SK-N-SH (cell line): ENCODE measurements at regions of chr16 and their contacts with region 1.

Region 1: GRCh38 chr16:47141773-47142485 is 1.8 kb downstream of the NETO2 start:
- DNase-seq: peak; percentile 76
- H3K4me3 ChIP-seq: peak overlapping the region; percentile 83 to 84
- H3K27ac ChIP-seq: peak overlapping the region; percentile 54 to 85; a peak in 3 of 4 replicates
- H3K4me1 ChIP-seq: peaks cover 7 to 15% of the 10 kb centered on the region in 2 experiments; a peak in 2 of 4 replicates
- H3K27me3 ChIP-seq: no peaks in the 10 kb centered on the region
- CTCF ChIP-seq: peak; percentile 93
- EP300 ChIP-seq: no peak
- RAD21 ChIP-seq: peak; percentile 96

Region 2: GRCh38 chr16:46947900-46948547 is 193.9 kb before region 1 on chr16:
- CTCF ChIA-PET with region 1: interaction called, 10 read pairs
- POLR2A ChIA-PET with region 1: no interaction called
- DNase-seq: peak; percentile 65
- H3K4me3 ChIP-seq: no peak overlapping the region
- H3K27ac ChIP-seq: no peak overlapping the region
- H3K4me1 ChIP-seq: no peaks in the 10 kb centered on the region
- H3K27me3 ChIP-seq: no peaks in the 10 kb centered on the region
- CTCF ChIP-seq: peak; percentile 72
- EP300 ChIP-seq: no peak
- RAD21 ChIP-seq: peak; percentile 87

Region 3: GRCh38 chr16:47018223-47018891 is 123.6 kb before region 1 on chr16:
- CTCF ChIA-PET with region 1: interaction called, 11 read pairs
- POLR2A ChIA-PET with region 1: no interaction called
- DNase-seq: peak; percentile 76
- H3K4me3 ChIP-seq: no peak overlapping the region
- H3K27ac ChIP-seq: no peak overlapping the region
- H3K4me1 ChIP-seq: no peaks in the 10 kb centered on the region
- H3K27me3 ChIP-seq: no peaks in the 10 kb centered on the region
- CTCF ChIP-seq: peak; percentile 43
- EP300 ChIP-seq: no peak
- RAD21 ChIP-seq: peak; percentile 73

Region 4: GRCh38 chr16:47110939-47111338 is 31.0 kb before region 1 on chr16:
- CTCF ChIA-PET with region 1: interaction called, 14 read pairs
- POLR2A ChIA-PET with region 1: no interaction called
- DNase-seq: peak; percentile 10
- H3K4me3 ChIP-seq: no peak overlapping the region
- H3K27ac ChIP-seq: no peak overlapping the region
- H3K4me1 ChIP-seq: no peaks in the 10 kb centered on the region
- H3K27me3 ChIP-seq: no peaks in the 10 kb centered on the region
- CTCF ChIP-seq: peak; percentile 17; the same call in 1 of the 2 replicates
- EP300 ChIP-seq: no peak
- RAD21 ChIP-seq: peak; percentile 32; the same call in 1 of the 2 replicates

Region 5: GRCh38 chr16:47156680-47157215 is 14.8 kb after region 1 on chr16:
- CTCF ChIA-PET with region 1: interaction called, 16 read pairs
- POLR2A ChIA-PET with region 1: no interaction called
- DNase-seq: no peak
- H3K4me3 ChIP-seq: no peak overlapping the region
- H3K27ac ChIP-seq: no peak overlapping the region
- H3K4me1 ChIP-seq: no peaks in the 10 kb centered on the region
- H3K27me3 ChIP-seq: no peaks in the 10 kb centered on the region
- CTCF ChIP-seq: no peak
- EP300 ChIP-seq: no peak
- RAD21 ChIP-seq: no peak

Region 6: GRCh38 chr16:47461598-47462266 is 319.8 kb after region 1 on chr16:
- CTCF ChIA-PET with region 1: interaction called, 14 read pairs
- POLR2A ChIA-PET with region 1: interaction called, 3 read pairs
- DNase-seq: peak; percentile 17
- H3K4me3 ChIP-seq: peak overlapping the region; percentile 88 to 98
- H3K27ac ChIP-seq: peak overlapping the region; percentile 98 to 99
- H3K4me1 ChIP-seq: peaks cover 20 to 42% of the 10 kb centered on the region in 2 experiments; a peak in 3 of 4 replicates
- H3K27me3 ChIP-seq: no peaks in the 10 kb centered on the region
- CTCF ChIP-seq: no peak
- EP300 ChIP-seq: no peak
- RAD21 ChIP-seq: no peak

Region 7: DNA sequence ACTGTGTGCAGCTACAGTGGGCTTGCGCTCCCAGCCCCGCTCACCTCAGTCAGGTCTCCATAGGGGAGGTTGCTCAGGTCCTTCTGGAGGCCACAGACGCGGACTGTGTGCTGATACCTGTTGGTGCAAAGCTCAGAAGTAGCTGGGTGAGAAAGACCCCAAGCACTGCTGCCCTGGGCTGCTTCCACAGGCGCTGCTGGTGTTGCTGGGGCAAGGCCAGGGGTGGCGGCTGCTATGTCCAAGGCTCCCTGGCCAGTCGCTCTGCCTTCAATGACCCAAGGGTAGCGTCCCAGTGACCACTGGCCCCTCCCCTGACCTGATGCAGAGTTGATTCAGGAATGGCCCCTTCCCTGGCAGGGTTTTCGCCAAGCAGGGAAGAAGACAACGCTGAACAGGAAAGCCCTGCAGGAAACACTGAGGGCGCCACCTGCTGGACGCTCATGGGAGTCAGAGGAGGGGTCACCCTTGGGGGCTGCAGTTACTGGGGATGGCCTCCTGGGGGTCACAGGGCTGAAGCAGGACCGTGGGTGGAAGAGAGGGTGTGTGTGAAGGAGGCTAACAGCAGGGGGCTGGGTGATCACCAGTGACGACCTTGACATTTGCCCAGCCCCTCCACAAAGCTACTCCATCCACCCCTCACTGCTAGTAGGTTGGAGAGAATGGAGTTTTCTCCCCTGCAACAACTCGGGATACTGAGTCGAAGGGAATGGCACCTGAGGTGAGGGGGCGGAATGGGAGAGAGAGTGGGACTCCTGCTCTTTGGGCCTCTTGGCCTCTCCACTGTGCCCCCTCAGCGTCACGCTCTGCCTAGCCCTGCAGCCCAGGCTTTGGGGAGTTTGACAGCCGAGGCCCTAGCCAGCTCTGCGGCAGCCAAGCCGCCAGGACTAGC is 975.5 kb after region 1 on chr16:
- CTCF ChIA-PET with region 1: interaction called, 23 read pairs
- POLR2A ChIA-PET with region 1: interaction called, 4 read pairs
- DNase-seq: peak; percentile 92
- H3K4me3 ChIP-seq: peak overlapping the region in 1 of 2 experiments; percentile 36; a peak in 1 of 4 replicates
- H3K27ac ChIP-seq: no peak overlapping the region
- H3K4me1 ChIP-seq: peaks cover 9 to 19% of the 10 kb centered on the region in 2 experiments; a peak in 2 of 4 replicates
- H3K27me3 ChIP-seq: no peaks in the 10 kb centered on the region
- CTCF ChIP-seq: peak; percentile 88
- EP300 ChIP-seq: no peak
- RAD21 ChIP-seq: peak; percentile 73